Mammary epithelial cell (primary cell): ENCODE measurements at regions of chr12 and their contacts with region 1.

Region 1: DNA sequence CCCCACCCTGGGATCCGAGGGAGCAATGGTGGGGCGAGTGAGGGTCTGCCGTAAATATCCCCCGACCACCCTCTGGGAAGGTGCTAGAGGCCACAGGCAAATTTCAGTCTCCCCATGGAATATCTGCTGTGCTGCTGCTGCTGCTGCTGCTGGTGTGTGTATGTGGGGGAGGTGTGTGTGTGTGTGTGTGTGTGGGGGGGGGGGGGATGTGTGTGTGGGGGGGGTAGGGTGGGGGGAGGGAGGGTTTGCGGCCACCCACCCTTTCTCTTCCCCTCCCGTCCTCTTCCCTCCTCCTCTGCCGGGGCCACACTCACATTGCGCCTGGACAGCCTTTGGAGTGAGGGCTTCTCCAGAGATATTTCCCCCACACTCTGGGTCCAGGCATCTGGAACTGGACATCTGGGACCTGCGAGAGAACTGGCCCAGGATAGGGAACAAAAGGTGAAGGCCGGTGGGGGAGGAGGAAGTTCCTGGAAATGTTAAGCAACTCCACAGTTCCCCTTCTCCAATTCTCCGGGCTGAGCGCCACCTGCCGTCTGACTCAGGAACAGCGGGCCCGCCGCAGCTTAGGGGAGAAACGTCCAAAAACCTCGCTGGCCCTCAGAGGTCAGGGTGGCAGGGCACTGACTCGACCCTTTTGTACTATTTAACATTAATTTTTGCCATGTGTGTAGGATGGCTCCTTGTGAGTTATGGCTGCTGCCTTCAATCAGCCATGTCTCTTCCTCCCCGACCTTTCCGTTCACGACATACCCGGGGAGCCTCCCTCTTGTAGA is at the start of gene C1RL:
- DNase-seq: peak; percentile 75
- H3K4me3 ChIP-seq: peak within 1 kb of the TSS; percentile 75 to 80 (median 76)
- H3K27ac ChIP-seq: peak within 1 kb of the TSS; percentile 81
- H3K4me1 ChIP-seq: peaks cover 23% of the 10 kb centered on the region
- H3K27me3 ChIP-seq: no peaks in the 10 kb centered on the region
- CTCF ChIP-seq: peak; percentile 96 to 99
- total RNA-seq, gene C1RL: 32.1 to 38.3 TPM

Region 2: GRCh38 chr12:7079826-7080125 is 29.2 kb before region 1 on chr12:
- CTCF ChIA-PET with region 1: interaction called, 5 read pairs
- dilution Hi-C with region 1: no loop called
- in situ Hi-C with region 1: no loop called
- intact Hi-C with region 1: loop called (anchors 1 kb)
- DNase-seq: peak; percentile 82
- H3K4me3 ChIP-seq: peak overlapping the region in 2 of 3 experiments; percentile 19
- H3K27ac ChIP-seq: peak overlapping the region; percentile 83
- H3K4me1 ChIP-seq: peaks cover 7% of the 10 kb centered on the region
- H3K27me3 ChIP-seq: no peaks in the 10 kb centered on the region
- CTCF ChIP-seq: no peak